GM18951 (cell line): ENCODE measurements at regions of chr10 and their contacts with region 1.

Region 1: GRCh38 chr10:5446390-5446926 is 34.1 kb downstream of the NET1 start:
- POLR2A ChIP-seq: peak; percentile 82

Region 2: DNA sequence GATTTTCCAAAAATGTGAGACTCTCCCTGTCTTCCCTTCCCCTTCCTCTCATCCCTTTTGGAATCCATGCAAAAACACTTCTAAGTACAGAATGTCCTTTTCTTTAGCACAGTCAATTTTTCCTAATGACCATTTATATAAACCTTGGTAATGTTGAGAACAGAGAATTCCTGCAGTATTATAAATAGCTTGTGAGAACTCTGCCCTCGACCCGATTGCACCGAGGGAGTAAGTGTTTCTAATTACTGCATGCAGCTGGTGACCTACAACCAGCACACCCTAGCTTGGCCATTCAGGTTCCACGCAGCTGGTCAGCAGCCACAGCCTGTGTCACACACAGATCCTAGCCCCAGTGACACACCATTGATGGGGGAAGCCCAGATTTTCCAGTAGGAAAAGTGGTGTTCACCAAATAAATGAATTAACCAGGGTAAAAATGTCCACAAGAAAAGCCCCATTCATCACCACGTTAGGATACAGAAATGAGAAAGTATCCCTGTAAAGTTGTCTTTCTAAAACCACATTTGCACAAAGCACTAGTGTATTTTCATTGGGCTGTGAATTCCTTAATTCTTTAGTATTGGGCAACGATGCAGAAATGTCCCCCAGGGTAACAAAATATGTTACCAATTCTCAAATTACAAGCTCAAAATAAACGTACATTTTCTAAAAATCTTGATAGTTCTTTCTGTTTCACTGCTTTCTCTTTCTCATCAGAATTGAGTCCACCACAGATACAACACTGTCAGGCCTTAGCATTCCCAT is 1162.4 kb before region 1 on chr10:
- in situ Hi-C with region 1: no loop called
- POLR2A ChIP-seq: no peak

Region 3: DNA sequence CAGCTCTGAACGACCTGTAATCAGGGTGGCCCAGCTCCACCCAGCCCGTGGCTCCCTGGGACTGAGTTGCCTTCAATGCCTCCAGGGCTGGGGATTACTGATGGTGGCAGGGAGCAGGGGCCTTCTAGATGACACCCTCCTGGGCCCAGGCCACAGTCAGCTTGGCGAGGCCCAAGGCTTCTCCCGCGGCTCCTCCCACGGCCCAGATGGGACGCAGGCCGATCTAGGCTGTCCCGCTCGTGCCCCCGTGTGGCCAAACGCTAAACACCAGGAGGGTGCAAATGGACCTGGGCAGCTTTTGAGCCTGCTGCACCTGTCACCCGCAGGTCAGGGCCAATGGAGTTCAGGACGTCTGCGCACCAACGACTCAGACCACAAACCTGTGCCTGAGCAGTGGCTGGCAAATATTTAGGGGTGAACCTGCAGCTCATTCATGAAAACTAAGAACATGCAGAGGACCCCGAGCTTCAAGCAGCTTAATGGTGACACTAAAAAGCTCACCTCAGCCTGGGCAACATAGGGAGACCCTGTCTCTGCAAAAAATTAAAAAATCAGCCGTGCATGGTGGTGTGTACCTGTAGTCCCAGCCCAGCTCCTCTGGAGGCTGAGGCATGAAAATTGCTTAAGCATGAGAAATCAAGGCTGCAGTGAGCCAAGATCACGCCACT is 176.8 kb after region 1 on chr10:
- in situ Hi-C with region 1: loop called (anchors 5 kb)
- POLR2A ChIP-seq: no peak

Region 4: DNA sequence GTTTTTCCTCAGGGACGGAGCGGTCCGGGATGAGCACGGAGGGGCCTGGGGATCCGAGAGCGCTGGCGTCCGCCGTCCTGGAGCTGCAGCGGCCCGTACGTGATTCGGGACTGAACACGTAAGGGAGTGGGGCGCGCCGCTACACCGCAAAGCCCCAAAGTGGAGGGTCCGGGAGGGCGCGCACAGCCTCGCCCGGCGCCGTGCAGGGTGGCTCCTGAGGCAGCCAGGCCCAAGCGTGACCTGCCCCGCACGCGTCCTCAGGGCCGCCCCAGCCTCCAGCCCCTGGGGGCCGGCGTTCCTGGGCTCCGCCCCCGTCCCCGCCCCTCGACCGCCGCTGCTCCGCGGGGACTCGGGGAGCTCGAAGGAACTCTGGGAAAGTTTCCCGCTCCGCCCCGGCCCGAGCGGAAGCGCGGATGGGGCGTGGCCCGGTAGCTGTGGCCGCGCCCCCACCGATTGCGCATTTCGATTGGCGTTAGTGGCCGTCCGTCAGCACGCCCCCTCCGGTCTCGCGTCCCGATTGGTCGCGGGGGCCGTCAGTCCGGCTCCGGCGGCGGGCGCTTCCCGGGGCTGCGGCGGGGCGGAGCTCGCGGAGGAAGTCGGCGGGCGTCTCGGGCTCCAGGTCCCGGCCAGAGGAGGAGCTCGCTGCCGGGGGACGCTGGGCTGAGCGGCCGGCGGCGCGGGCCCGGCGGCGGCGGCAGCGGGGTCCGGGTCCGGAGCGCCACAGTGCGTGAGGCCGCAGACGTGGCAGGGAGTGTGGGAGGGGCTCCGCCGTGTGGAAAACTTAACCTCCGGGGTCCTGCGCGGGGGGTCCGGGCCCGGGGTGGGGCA is 443.4 kb after region 1 on chr10 and contains the starts of genes ANKRD16 and FBH1:
- in situ Hi-C with region 1: loop called (anchors 25 kb)
- POLR2A ChIP-seq: peak; percentile 86